CD8-positive, alpha-beta T cell (primary cell): ENCODE measurements at regions of chr7 and their contacts with region 1.

Region 1: GRCh38 chr7:7968543-7969305 is at the start of gene GLCCI1:
- DNase-seq: peak; percentile 91 to 99 (median 96)
- ATAC-seq: peak; percentile 88
- H3K4me3 ChIP-seq: peak within 1 kb of the TSS; percentile 44 to 74
- H3K4me3 Mint-ChIP-seq: peak within 1 kb of the TSS; percentile 92
- H3K27ac ChIP-seq: peak within 1 kb of the TSS; percentile 61 to 79
- H3K27ac Mint-ChIP-seq: peak within 1 kb of the TSS; percentile 95
- H3K4me1 ChIP-seq: peaks cover 35% of the 10 kb centered on the region
- H3K4me1 Mint-ChIP-seq: peaks cover 36% of the 10 kb centered on the region
- H3K27me3 ChIP-seq: no peaks in the 10 kb centered on the region
- H3K27me3 Mint-ChIP-seq: no peaks in the 10 kb centered on the region
- CTCF ChIP-seq: no peak
- total RNA-seq, gene GLCCI1: 21.8 to 23.6 TPM

Region 2: GRCh38 chr7:7566651-7567611 is 401.8 kb before region 1 on chr7 and contains the start of gene MIOS:
- CTCF ChIA-PET with region 1: no interaction called
- POLR2A ChIA-PET with region 1: no interaction called
- intact Hi-C with region 1: loop called (anchors 1 to 5 kb)
- DNase-seq: peak; percentile 65 to 92 (median 77)
- ATAC-seq: peak; percentile 90
- H3K4me3 ChIP-seq: peak within 1 kb of the TSS; percentile 62 to 73
- H3K4me3 Mint-ChIP-seq: peak within 1 kb of the TSS; percentile 78
- H3K27ac ChIP-seq: peak within 1 kb of the TSS; percentile 83
- H3K27ac Mint-ChIP-seq: peak within 1 kb of the TSS; percentile 92
- H3K4me1 ChIP-seq: peaks cover 34% of the 10 kb centered on the region
- H3K4me1 Mint-ChIP-seq: peaks cover 35% of the 10 kb centered on the region
- H3K27me3 ChIP-seq: no peaks in the 10 kb centered on the region
- H3K27me3 Mint-ChIP-seq: no peaks in the 10 kb centered on the region
- CTCF ChIP-seq: no peak
- total RNA-seq, gene MIOS: 35.1 to 36.8 TPM

Region 3: DNA sequence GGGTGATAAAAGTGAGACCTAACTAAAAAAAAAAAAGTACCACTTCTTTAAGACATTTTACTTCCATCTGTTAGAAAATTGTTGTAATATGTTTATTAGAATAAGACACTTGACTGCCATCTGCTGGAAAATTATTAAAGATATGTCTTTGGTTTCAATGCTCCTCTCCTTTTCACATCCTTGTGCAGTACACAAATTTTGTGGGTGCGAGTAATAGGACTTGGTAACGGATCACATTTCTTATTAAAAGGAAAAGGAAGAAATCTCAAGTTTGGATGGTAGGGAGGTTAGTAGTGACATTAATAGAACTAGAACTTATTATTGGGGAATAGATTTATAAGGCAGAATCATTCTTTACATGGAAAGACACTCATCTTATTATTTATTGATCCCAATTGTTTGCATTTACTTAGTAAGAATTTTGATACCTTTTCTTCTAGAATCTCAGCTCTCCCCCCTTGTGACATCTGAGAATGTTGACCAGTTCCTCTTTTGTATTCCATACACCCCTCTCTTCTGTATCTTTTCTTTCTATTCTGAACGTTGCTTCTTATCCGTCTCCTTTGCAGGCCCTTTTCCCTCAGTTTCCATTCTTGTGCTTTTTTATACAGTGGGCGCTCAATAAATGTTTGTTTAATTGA is 207.3 kb before region 1 on chr7:
- CTCF ChIA-PET with region 1: no interaction called
- POLR2A ChIA-PET with region 1: interaction called, 5 read pairs
- intact Hi-C with region 1: loop called (anchors 5 kb)
- DNase-seq: peak in 2 of 9 experiments; percentile 61 to 68
- ATAC-seq: peak; percentile 24
- H3K4me3 ChIP-seq: peak overlapping the region; percentile 49 to 52
- H3K4me3 Mint-ChIP-seq: peak overlapping the region; percentile 93
- H3K27ac ChIP-seq: peak overlapping the region; percentile 52 to 80
- H3K27ac Mint-ChIP-seq: peak overlapping the region; percentile 98
- H3K4me1 ChIP-seq: peaks cover 29% of the 10 kb centered on the region
- H3K4me1 Mint-ChIP-seq: peaks cover 46% of the 10 kb centered on the region
- H3K27me3 ChIP-seq: no peaks in the 10 kb centered on the region
- H3K27me3 Mint-ChIP-seq: no peaks in the 10 kb centered on the region
- CTCF ChIP-seq: peak; percentile 46

Region 4: GRCh38 chr7:7989133-7989984 is 20.6 kb after region 1 on chr7:
- CTCF ChIA-PET with region 1: interaction called, 3 read pairs
- POLR2A ChIA-PET with region 1: interaction called, 10 read pairs
- intact Hi-C with region 1: loop called in 1 of 2 experiments (anchors 2 kb)
- DNase-seq: peak in 1 of 9 experiments; percentile 26
- ATAC-seq: peak; percentile 44
- H3K4me3 ChIP-seq: peak overlapping the region; percentile 15 to 28
- H3K4me3 Mint-ChIP-seq: peak overlapping the region; percentile 75
- H3K27ac ChIP-seq: peak overlapping the region; percentile 20 to 59
- H3K27ac Mint-ChIP-seq: peak overlapping the region; percentile 81
- H3K4me1 ChIP-seq: peaks cover 21% of the 10 kb centered on the region
- H3K4me1 Mint-ChIP-seq: peaks cover 63% of the 10 kb centered on the region
- H3K27me3 ChIP-seq: no peaks in the 10 kb centered on the region
- H3K27me3 Mint-ChIP-seq: no peaks in the 10 kb centered on the region
- CTCF ChIP-seq: no peak

Region 5: GRCh38 chr7:8035647-8036518 is 67.2 kb after region 1 on chr7:
- CTCF ChIA-PET with region 1: interaction called, 3 read pairs
- POLR2A ChIA-PET with region 1: interaction called, 10 read pairs
- intact Hi-C with region 1: no loop called
- DNase-seq: peak in 4 of 9 experiments; percentile 5 to 71 (median 56)
- ATAC-seq: peak; percentile 92
- H3K4me3 ChIP-seq: no peak overlapping the region
- H3K4me3 Mint-ChIP-seq: no peak overlapping the region
- H3K27ac ChIP-seq: peak overlapping the region in 1 of 2 experiments; percentile 40
- H3K27ac Mint-ChIP-seq: peak overlapping the region; percentile 58
- H3K4me1 ChIP-seq: peaks cover 5% of the 10 kb centered on the region
- H3K4me1 Mint-ChIP-seq: peaks cover 26% of the 10 kb centered on the region
- H3K27me3 ChIP-seq: no peaks in the 10 kb centered on the region
- H3K27me3 Mint-ChIP-seq: no peaks in the 10 kb centered on the region
- CTCF ChIP-seq: peak; percentile 55

Region 6: GRCh38 chr7:8134089-8134733 is 165.5 kb after region 1 on chr7:
- CTCF ChIA-PET with region 1: no interaction called
- POLR2A ChIA-PET with region 1: no interaction called
- intact Hi-C with region 1: loop called (anchors 2 kb)
- DNase-seq: peak in 2 of 9 experiments; percentile 55 to 64
- ATAC-seq: peak; percentile 21
- H3K4me3 ChIP-seq: no peak overlapping the region
- H3K4me3 Mint-ChIP-seq: peak overlapping the region; percentile 37
- H3K27ac ChIP-seq: peak overlapping the region in 1 of 2 experiments; percentile 57
- H3K27ac Mint-ChIP-seq: peak overlapping the region; percentile 99
- H3K4me1 ChIP-seq: peaks cover 48% of the 10 kb centered on the region
- H3K4me1 Mint-ChIP-seq: peaks cover 60% of the 10 kb centered on the region
- H3K27me3 ChIP-seq: no peaks in the 10 kb centered on the region
- H3K27me3 Mint-ChIP-seq: no peaks in the 10 kb centered on the region
- CTCF ChIP-seq: no peak

Region 7: DNA sequence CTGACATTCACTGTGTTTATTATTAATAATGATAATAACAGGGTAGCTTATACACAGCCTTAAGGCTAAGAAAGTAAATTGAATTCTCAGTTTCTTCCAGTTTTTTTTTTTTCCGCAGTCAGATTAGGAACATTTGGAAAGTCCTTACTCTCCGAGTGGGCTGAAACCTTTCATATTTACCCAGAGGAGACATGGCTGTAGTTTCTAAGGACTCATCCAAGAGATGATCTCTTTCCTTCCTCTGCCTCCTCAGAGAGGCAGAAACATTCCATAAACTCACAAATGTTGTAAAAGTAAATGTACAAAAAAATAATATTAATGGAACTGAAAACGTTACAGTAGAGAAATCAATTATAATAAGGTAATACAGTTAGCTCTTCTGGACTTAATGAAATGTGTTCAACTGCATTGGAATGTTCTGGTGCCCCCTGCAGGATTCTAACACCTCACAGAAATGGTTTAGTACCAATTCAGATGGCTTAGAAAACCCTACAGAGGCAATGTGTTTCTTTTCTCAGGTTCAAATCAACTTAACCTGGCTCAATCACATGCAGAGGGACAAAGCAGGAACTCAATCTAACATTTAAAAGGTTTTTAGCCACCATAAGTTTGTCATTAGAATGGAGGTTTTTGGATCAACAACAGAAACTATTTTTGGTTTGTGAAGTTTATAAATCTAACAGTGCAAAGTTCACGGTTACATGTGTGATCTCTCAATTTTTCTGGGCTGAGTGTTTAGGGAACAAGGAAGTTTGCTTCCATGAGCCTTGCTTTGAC is 221.6 kb after region 1 on chr7:
- CTCF ChIA-PET with region 1: interaction called, 14 read pairs
- POLR2A ChIA-PET with region 1: interaction called, 5 read pairs
- intact Hi-C with region 1: loop called in 1 of 2 experiments (anchors 5 kb)
- DNase-seq: peak; percentile 32 to 84 (median 70)
- ATAC-seq: peak; percentile 86
- H3K4me3 ChIP-seq: no peak overlapping the region
- H3K4me3 Mint-ChIP-seq: no peak overlapping the region
- H3K27ac ChIP-seq: no peak overlapping the region
- H3K27ac Mint-ChIP-seq: no peak overlapping the region
- H3K4me1 ChIP-seq: no peaks in the 10 kb centered on the region
- H3K4me1 Mint-ChIP-seq: peaks cover 16% of the 10 kb centered on the region
- H3K27me3 ChIP-seq: no peaks in the 10 kb centered on the region
- H3K27me3 Mint-ChIP-seq: peaks cover 5% of the 10 kb centered on the region
- CTCF ChIP-seq: peak; percentile 89